ENCODE measurements at regions of chr7 and their contacts with region 1.

Region 1: DNA sequence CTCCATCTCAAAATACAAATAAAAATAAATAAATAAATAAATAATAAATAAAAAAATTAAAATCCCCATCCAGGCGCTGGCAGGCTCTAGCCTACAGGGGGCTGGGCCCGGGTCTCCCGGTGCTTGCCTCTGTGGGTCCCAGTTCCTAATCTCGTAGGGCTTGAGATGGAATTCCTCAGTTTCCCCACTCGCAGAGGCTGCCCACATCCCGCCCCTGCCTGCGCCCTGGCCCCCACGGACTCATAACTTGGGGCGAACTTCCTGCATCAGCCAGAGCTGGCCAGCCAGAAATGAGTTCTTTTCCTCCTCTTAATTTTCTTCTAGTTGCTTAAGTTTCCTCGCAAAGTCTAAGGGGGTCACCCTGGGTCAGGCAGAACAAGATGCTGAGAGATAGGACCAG is 22.0 kb upstream of the SRRM3 start:
- DNase-seq: no peak
- ATAC-seq: no peak

Region 2: GRCh38 chr7:76149847-76150691 is 29.6 kb before region 1 on chr7:
- intact Hi-C with region 1: no loop called
- DNase-seq: no peak
- ATAC-seq: no peak

Region 3: DNA sequence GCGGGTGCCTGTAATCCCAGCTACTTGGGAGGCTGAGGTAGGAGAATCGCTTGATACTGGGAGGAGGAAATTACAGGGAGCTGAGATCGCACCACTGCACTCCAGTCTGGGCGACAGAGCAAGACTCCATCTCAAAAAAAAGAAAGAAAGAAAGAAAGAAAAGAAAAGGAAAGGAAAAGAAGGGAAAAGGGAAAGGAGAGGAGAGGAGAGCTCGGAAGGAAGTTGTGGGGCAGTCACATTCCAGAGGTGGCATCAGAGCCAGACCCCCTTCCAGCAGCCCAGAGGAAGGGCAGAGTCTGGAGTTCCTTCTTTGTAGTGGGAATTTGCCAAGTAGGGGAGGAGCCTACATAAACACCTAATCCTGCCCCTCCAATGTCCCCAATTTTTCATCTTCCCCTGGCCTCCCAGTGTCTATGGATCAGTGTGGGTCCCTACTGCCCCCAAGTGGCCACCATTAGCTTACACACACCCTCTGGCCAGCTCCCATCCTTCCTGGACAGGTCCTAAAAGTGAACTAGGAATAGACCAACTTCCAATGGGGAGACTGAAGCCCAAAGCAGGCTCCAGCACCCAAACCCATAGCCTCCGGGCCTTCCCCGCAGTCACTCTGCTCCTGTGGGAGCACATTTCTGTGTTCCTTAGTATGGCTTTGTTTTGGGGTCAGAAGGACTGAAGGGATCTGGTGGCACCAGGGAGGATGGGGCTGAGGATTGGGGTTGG is 83.2 kb after region 1 on chr7:
- intact Hi-C with region 1: loop called (anchors 5 kb)
- DNase-seq: no peak
- ATAC-seq: peak; percentile 80

Region 4: GRCh38 chr7:76282344-76283253 is 102.9 kb after region 1 on chr7:
- intact Hi-C with region 1: loop called (anchors 10 kb)
- DNase-seq: no peak
- ATAC-seq: peak; percentile 74

Measured in Right ventricle myocardium inferior (tissue), 1 donor.